Heart left ventricle (tissue), 16 donors: ENCODE measurements at regions of chr10 and their contacts with region 1.

Region 1: GRCh38 chr10:69092959-69093850 is 5.3 kb downstream of the SRGN start:
- DNase-seq: peak in 4 of 5 donors; percentile 68 to 83 (median 78)
- ATAC-seq: peak; percentile 57 to 91 (median 76)
- H3K4me3 ChIP-seq: peak overlapping the region in 1 of 12 donors; percentile 33
- H3K27ac ChIP-seq: peak overlapping the region in 5 of 12 donors; percentile 6 to 97 (median 40)
- H3K4me1 ChIP-seq: peaks cover 0 to 65% (median 8%) of the 10 kb centered on the region in 12 donors
- H3K27me3 ChIP-seq: no peaks in the 10 kb centered on the region
- CTCF ChIP-seq: peak; percentile 71 to 90 (median 84)
- POLR2A ChIP-seq: no peak

Region 2: DNA sequence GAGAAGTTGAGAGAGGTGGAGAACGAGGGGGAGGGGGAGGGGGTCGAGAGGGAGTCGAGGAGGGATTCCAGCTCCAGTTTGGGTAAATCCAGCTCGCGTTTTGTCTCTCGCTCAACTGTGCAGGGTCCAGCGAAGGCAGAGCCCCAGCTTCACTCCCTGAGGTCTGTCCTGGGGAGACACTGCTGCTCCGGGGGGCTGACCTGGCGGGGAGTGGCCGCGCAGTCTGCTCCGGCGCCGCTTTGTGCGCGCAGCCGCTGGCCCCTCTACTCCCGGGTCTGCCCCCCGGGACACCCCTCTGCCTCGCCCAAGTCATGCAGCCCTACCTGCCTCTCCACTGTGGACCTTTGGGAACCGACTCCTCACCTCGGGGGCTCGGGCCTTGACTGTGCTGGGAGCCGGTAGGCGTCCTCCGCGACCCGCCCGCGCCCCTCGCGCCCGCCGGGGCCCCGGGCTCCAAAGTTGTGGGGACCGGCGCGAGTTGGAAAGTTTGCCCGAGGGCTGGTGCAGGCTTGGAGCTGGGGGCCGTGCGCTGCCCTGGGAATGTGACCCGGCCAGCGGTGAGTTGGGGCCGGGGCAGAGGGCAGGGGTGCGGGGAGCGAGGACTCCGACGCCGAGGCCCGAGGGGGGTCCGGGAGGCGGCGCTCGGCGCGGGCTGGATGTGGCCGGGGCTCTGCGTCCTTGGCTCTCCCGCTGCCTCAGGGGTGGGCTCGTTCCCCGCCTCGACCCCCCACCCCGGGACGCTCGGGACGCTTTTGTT is 532.8 kb before region 1 on chr10 and contains the start of gene TET1:
- intact Hi-C with region 1: no loop called
- DNase-seq: peak; percentile 30 to 68 (median 43)
- ATAC-seq: peak in 3 of 4 donors; percentile 55 to 81 (median 79)
- H3K4me3 ChIP-seq: peak within 1 kb of the TSS; percentile 61 to 91 (median 74)
- H3K27ac ChIP-seq: peak within 1 kb of the TSS in 7 of 12 donors; percentile 3 to 63 (median 32)
- H3K4me1 ChIP-seq: peaks cover 0 to 27% (median 7%) of the 10 kb centered on the region in 12 donors
- H3K27me3 ChIP-seq: peaks cover 0 to 46% (median 9%) of the 10 kb centered on the region in 9 donors
- CTCF ChIP-seq: no peak
- POLR2A ChIP-seq: no peak
- total RNA-seq, gene TET1: 1.3 to 4.1 (median 2.6) TPM

Region 3: DNA sequence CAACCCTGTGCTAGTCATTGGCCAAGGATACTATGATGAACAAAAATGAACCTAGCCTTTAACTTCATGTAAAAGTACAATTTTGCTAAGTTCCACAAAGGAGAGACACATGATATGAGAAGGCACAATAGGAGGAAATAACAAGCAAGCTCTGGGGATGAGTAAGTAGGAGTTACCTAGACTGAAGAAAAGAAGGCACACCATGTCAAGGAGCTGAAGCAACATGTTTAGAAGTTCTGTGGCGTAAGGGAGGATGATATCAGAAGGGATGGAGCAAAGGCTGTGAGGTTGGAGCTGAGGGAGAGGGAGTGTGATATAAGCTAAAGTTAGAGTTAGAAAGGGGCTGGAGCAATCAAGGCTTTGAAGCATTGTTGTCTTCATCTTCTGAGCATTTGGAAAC is 79.0 kb before region 1 on chr10:
- intact Hi-C with region 1: loop called in 2 of 10 experiments (anchors 5 kb)
- DNase-seq: no peak
- ATAC-seq: no peak
- H3K4me3 ChIP-seq: no peak overlapping the region
- H3K27ac ChIP-seq: no peak overlapping the region
- H3K4me1 ChIP-seq: peaks cover 0 to 3% (median 0%) of the 10 kb centered on the region in 12 donors
- H3K27me3 ChIP-seq: no peaks in the 10 kb centered on the region
- CTCF ChIP-seq: no peak
- POLR2A ChIP-seq: no peak

Region 4: GRCh38 chr10:69051303-69051702 is 41.9 kb before region 1 on chr10:
- intact Hi-C with region 1: loop called in 4 of 10 experiments (anchors 2 to 5 kb)
- DNase-seq: peak in 4 of 5 donors; percentile 45 to 63 (median 52)
- ATAC-seq: peak; percentile 17 to 64 (median 34)
- H3K4me3 ChIP-seq: no peak overlapping the region
- H3K27ac ChIP-seq: peak overlapping the region in 10 of 12 donors; percentile 4 to 98 (median 74)
- H3K4me1 ChIP-seq: peaks cover 0 to 93% (median 8%) of the 10 kb centered on the region in 12 donors
- H3K27me3 ChIP-seq: no peaks in the 10 kb centered on the region
- CTCF ChIP-seq: no peak
- POLR2A ChIP-seq: no peak

Region 5: GRCh38 chr10:69061305-69062161 is 31.7 kb before region 1 on chr10:
- intact Hi-C with region 1: loop called in 4 of 10 experiments (anchors 2 to 5 kb)
- DNase-seq: peak; percentile 64 to 77 (median 67)
- ATAC-seq: peak; percentile 84 to 92 (median 88)
- H3K4me3 ChIP-seq: peak overlapping the region in 9 of 12 donors; percentile 0 to 49 (median 25)
- H3K27ac ChIP-seq: peak overlapping the region; percentile 82 to 99 (median 90)
- H3K4me1 ChIP-seq: peaks cover 8 to 96% (median 38%) of the 10 kb centered on the region in 12 donors
- H3K27me3 ChIP-seq: no peaks in the 10 kb centered on the region
- CTCF ChIP-seq: no peak
- POLR2A ChIP-seq: peak in 1 of 2 donors; percentile 15

Region 6: DNA sequence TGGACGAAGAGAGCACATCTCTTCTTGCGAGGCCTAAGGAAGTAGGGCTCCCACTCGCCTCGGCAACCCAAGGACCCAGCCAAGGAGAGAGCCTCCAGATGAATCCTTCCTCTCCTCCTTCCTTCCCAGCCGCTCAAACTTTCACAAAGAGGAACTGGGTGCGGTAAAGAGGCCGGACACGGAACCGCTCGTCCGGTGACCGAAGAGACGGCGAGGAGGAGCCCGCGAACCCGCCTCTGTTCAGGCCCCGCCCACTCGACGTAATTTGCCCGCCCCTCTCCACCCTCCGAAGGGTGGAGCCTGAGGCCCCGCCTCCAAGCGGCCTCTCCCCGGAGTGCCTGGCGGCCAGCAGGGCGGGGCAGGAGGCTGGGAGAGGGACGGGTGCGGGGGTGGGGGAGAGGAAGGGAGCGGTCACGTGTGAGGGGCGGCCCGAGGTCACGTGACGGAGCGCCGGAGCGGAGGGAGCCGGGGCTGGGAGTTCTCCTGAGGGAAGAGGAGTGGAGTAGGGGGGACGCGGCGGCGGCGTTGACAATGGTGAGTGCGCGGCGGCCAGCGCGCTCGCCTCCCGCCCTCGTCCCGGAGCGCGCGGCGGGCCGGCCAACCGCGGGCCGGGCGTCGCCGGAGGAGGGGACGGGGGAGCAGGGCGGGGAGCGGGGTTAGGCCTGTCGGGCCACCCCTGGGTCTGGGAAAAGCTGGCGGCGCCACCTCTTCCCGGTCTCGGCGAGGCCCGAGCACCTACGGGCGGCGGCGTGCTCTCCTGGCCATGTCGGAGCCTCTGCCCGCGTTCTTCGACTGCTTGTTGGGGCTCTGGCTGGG is 30.8 kb after region 1 on chr10 and contains the start of gene VPS26A:
- intact Hi-C with region 1: loop called in 1 of 10 experiments (anchors 1 kb)
- DNase-seq: peak; percentile 99 to 100 (median 99)
- ATAC-seq: peak; percentile 98 to 99 (median 99)
- H3K4me3 ChIP-seq: peak within 1 kb of the TSS; percentile 50 to 100 (median 96)
- H3K27ac ChIP-seq: peak within 1 kb of the TSS; percentile 91 to 99 (median 96)
- H3K4me1 ChIP-seq: peaks cover 0 to 38% (median 16%) of the 10 kb centered on the region in 12 donors
- H3K27me3 ChIP-seq: no peaks in the 10 kb centered on the region
- CTCF ChIP-seq: peak in 7 of 12 donors; percentile 10 to 59 (median 36)
- POLR2A ChIP-seq: peak; percentile 80 to 95
- total RNA-seq, gene VPS26A: 15.5 to 42.3 (median 34.8) TPM